ENCODE measurements at regions of chr12 and their contacts with region 1.

Region 1: DNA sequence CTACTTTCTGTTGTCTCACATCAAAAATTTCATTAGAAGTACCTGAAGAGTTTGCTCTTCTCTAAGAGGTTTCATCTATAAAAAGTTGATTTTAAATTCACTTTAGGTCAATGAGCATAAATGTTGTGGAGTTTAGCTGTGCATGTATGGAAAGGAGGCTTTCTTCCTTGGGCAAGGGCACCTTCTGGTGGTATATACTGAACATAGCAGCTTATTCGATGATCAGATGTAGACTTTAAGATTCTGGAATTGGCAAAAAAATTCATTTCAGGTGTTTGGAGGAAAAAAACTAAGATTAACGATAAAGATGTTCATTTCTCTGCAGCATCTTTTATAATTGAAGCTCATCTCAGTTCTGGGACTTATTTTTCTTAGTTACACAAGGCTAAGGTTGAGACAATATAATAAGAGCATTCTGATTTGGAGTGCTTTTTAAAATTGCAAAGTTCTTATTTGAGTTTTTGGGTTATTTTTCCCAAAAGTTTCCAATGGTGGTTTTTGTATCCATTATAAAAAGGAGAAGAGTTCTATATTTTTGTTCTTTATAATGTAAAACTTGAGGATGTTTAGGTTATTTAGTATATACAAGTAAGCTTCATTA is 46.8 kb downstream of the TMEM117 start:
- DNase-seq: peak; percentile 60
- ATAC-seq: peak; percentile 65
- H3K4me3 Mint-ChIP-seq: no peak overlapping the region
- H3K27ac Mint-ChIP-seq: no peak overlapping the region
- H3K4me1 Mint-ChIP-seq: no peaks in the 10 kb centered on the region
- H3K27me3 Mint-ChIP-seq: no peaks in the 10 kb centered on the region

Region 2: GRCh38 chr12:43444940-43445564 is 437.6 kb before region 1 on chr12:
- CTCF ChIA-PET with region 1: interaction called, 17 read pairs
- POLR2A ChIA-PET with region 1: no interaction called
- DNase-seq: peak; percentile 62
- ATAC-seq: no peak
- H3K4me3 Mint-ChIP-seq: no peak overlapping the region
- H3K27ac Mint-ChIP-seq: no peak overlapping the region
- H3K4me1 Mint-ChIP-seq: no peaks in the 10 kb centered on the region
- H3K27me3 Mint-ChIP-seq: no peaks in the 10 kb centered on the region

Region 3: DNA sequence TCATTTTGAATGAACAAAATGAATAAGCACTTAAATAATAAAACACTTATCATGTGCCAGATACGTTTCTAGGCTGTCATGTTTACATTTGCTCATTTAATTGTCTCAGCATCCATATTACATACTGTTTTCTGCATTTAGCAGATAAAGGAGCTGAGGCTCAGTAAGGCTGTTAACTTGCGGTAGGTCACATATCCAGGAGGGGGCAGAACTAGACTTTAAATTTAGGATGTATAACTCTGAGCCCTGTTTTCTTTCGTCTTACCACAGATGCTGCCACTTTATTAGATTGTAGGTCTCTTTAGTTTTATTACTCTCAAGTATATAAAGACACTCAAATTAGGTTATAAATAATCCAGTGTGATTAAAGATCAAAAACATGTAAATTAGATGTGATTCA is 106.2 kb before region 1 on chr12:
- CTCF ChIA-PET with region 1: interaction called, 34 read pairs
- POLR2A ChIA-PET with region 1: no interaction called
- DNase-seq: no peak
- ATAC-seq: peak; percentile 58
- H3K4me3 Mint-ChIP-seq: no peak overlapping the region
- H3K27ac Mint-ChIP-seq: no peak overlapping the region
- H3K4me1 Mint-ChIP-seq: no peaks in the 10 kb centered on the region
- H3K27me3 Mint-ChIP-seq: no peaks in the 10 kb centered on the region

Region 4: GRCh38 chr12:43805860-43806736 is 76.6 kb before region 1 on chr12 and contains the start of gene TWF1:
- CTCF ChIA-PET with region 1: interaction called, 28 read pairs
- POLR2A ChIA-PET with region 1: interaction called, 10 read pairs
- DNase-seq: peak; percentile 90
- ATAC-seq: peak; percentile 95
- H3K4me3 Mint-ChIP-seq: peak within 1 kb of the TSS; percentile 98
- H3K27ac Mint-ChIP-seq: peak within 1 kb of the TSS; percentile 100
- H3K4me1 Mint-ChIP-seq: peaks cover 38% of the 10 kb centered on the region
- H3K27me3 Mint-ChIP-seq: no peaks in the 10 kb centered on the region
- total RNA-seq, gene TWF1: 24.1 to 25.9 TPM

Region 5: GRCh38 chr12:43914923-43915468 is 32.3 kb after region 1 on chr12:
- CTCF ChIA-PET with region 1: no interaction called
- POLR2A ChIA-PET with region 1: no interaction called
- DNase-seq: no peak
- ATAC-seq: no peak
- H3K4me3 Mint-ChIP-seq: no peak overlapping the region
- H3K27ac Mint-ChIP-seq: no peak overlapping the region
- H3K4me1 Mint-ChIP-seq: no peaks in the 10 kb centered on the region
- H3K27me3 Mint-ChIP-seq: no peaks in the 10 kb centered on the region